Endothelial cell of umbilical vein (primary cell): ENCODE measurements at regions of chr5 and their contacts with region 1.

Region 1: DNA sequence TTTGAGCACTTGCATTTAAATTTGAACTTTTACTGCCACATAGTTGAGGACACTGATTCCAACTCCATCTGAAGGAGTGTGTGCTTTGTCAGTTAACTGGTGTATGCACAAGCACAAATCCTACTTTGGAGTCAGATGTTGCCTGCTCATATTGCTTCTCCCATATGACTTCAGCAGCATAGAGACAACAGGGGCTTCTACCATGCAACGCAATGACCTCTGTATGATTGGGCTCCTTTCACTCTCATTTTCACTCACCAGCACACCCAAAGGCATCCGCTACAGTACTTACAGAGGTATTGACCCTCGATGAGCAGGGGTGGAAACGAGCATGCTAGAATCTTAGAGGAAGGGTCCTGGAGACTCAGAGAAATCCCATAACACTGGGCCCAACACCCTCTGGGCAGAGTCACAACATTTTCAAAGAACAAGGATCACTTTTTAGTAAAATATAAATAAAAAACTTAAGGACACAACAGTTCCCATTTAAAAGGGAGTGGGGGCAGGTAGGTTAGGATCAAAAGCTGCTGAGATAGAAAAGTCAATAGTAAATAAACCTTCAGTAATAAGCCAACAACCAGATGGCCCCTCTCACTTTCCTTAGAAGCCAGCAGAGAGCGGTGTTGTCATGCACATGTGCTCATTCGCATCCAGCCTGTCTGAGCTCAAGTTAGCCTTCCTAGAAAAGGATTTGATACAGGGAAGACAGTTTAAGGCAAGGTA is 203.8 kb downstream of the SNCAIP start:
- DNase-seq: peak; percentile 80
- H3K4me3 ChIP-seq: no peak overlapping the region
- H3K27ac ChIP-seq: no peak overlapping the region
- H3K4me1 ChIP-seq: no peaks in the 10 kb centered on the region
- H3K27me3 ChIP-seq: peaks cover 0 to 2% of the 10 kb centered on the region in 2 experiments
- CTCF ChIP-seq: peak; percentile 59 to 78
- POLR2A ChIP-seq: no peak

Region 2: GRCh38 chr5:122532035-122532434 is 16.2 kb after region 1 on chr5:
- CTCF ChIA-PET with region 1: interaction called, 10 read pairs
- POLR2A ChIA-PET with region 1: no interaction called
- dilution Hi-C with region 1: no loop called
- intact Hi-C with region 1: no loop called
- DNase-seq: no peak
- H3K4me3 ChIP-seq: no peak overlapping the region
- H3K27ac ChIP-seq: no peak overlapping the region
- H3K4me1 ChIP-seq: no peaks in the 10 kb centered on the region
- H3K27me3 ChIP-seq: no peaks in the 10 kb centered on the region
- CTCF ChIP-seq: no peak
- POLR2A ChIP-seq: no peak

Region 3: GRCh38 chr5:122774861-122775549 is 259.1 kb after region 1 on chr5 and contains the start of gene SNX2:
- CTCF ChIA-PET with region 1: interaction called, 4 read pairs
- POLR2A ChIA-PET with region 1: no interaction called
- dilution Hi-C with region 1: no loop called
- intact Hi-C with region 1: loop called (anchors 2 kb)
- DNase-seq: peak; percentile 89
- H3K4me3 ChIP-seq: peak within 1 kb of the TSS; percentile 84 to 88 (median 86)
- H3K27ac ChIP-seq: peak within 1 kb of the TSS; percentile 44
- H3K4me1 ChIP-seq: peaks cover 18% of the 10 kb centered on the region
- H3K27me3 ChIP-seq: peaks cover 2 to 7% of the 10 kb centered on the region in 2 experiments
- CTCF ChIP-seq: peak in 1 of 2 donors; percentile 18
- POLR2A ChIP-seq: peak; percentile 62
- total RNA-seq, gene SNX2: 46.3 and 51.2 TPM in 2 replicates

Region 4: DNA sequence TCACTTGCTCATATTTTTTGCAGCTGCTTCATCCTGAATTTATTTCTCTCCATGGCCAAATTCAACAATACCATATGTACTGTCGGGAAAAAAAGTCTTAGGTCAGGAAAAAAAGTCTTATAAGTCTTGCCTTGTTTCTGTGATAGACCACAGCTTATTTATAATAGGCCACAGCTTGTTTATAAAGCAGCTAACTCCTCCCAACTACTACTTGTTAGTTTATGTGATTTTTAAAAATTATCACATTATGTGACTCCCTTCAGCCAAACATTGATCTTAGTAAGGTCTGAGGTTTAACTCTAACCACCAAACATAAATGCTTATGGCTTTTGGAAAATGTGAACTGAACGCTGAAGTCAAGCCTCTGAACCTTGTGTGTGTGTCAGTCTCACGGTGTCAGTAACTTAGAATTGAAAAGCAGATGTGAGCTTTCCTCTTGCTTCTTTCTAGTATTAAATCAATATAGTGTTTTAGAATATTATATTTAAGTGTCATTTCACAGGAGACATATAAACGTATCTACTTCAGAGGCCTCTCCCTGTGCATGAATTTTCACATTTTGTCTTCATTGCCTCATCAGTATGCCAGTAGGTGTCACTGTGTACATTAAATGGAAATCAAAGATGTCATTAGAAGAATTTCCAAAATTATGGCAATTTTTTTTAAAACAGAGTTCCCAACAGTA is 380.9 kb after region 1 on chr5:
- CTCF ChIA-PET with region 1: interaction called, 6 read pairs
- POLR2A ChIA-PET with region 1: no interaction called
- dilution Hi-C with region 1: no loop called
- intact Hi-C with region 1: loop called (anchors 1 kb)
- DNase-seq: peak; percentile 46
- H3K4me3 ChIP-seq: no peak overlapping the region
- H3K27ac ChIP-seq: no peak overlapping the region
- H3K4me1 ChIP-seq: no peaks in the 10 kb centered on the region
- H3K27me3 ChIP-seq: no peaks in the 10 kb centered on the region
- CTCF ChIP-seq: peak; percentile 31 to 40
- POLR2A ChIP-seq: no peak

Region 5: GRCh38 chr5:123089914-123090670 is 574.2 kb after region 1 on chr5:
- CTCF ChIA-PET with region 1: interaction called, 4 read pairs
- POLR2A ChIA-PET with region 1: no interaction called
- dilution Hi-C with region 1: no loop called
- intact Hi-C with region 1: loop called (anchors 5 kb)
- DNase-seq: peak; percentile 13
- H3K4me3 ChIP-seq: peak overlapping the region; percentile 18 to 32 (median 21)
- H3K27ac ChIP-seq: no peak overlapping the region
- H3K4me1 ChIP-seq: peaks cover 16% of the 10 kb centered on the region
- H3K27me3 ChIP-seq: peaks cover 82 to 99% of the 10 kb centered on the region in 2 experiments
- CTCF ChIP-seq: no peak
- POLR2A ChIP-seq: no peak

Region 6: GRCh38 chr5:123371575-123372179 is 855.8 kb after region 1 on chr5:
- CTCF ChIA-PET with region 1: interaction called, 41 read pairs
- POLR2A ChIA-PET with region 1: no interaction called
- dilution Hi-C with region 1: no loop called
- intact Hi-C with region 1: loop called (anchors 1 kb)
- DNase-seq: no peak
- H3K4me3 ChIP-seq: no peak overlapping the region
- H3K27ac ChIP-seq: no peak overlapping the region
- H3K4me1 ChIP-seq: no peaks in the 10 kb centered on the region
- H3K27me3 ChIP-seq: no peaks in the 10 kb centered on the region
- CTCF ChIP-seq: peak; percentile 40 to 49
- POLR2A ChIP-seq: no peak

Region 7: DNA sequence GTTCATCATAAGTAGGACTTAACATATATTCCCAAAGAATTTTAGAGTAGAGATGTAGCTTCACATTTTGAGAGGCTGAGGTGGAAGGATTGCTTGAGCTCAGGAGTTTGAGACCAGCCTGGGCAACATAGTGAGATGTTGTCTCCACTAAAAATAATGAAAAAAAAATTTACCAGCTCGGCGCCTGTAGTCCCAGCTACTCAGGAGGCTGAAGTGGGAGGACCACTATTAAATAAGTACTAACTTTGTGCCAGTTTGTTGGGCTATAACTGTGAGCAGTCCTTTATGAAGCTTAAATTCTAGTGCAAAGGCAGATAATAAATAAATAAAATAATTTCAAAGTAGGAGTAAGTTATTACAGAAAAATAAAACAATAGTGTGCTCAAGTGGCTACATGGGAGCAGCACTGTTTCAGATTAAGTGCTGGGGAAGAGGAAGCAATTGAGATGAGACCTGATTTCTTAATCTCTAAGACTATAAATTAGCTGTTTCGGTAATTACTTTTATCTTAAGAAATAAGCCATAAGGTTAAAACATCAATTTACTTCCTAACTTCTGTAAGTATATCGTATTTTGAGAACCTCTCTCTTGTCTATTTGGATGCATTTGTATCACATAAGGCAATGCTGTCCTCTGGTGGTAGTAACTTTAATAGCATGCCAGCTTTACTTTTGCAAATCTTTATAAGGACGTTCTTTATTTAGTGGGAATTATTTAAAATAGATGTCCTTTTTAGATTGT is 1095.0 kb after region 1 on chr5:
- CTCF ChIA-PET with region 1: interaction called, 17 read pairs
- POLR2A ChIA-PET with region 1: no interaction called
- dilution Hi-C with region 1: no loop called
- intact Hi-C with region 1: loop called (anchors 1 kb)
- DNase-seq: peak; percentile 84
- H3K4me3 ChIP-seq: no peak overlapping the region
- H3K27ac ChIP-seq: no peak overlapping the region
- H3K4me1 ChIP-seq: no peaks in the 10 kb centered on the region
- H3K27me3 ChIP-seq: no peaks in the 10 kb centered on the region
- CTCF ChIP-seq: peak; percentile 68 to 72
- POLR2A ChIP-seq: no peak